ENCODE measurements at regions of chr9 and their contacts with region 1.

Region 1: DNA sequence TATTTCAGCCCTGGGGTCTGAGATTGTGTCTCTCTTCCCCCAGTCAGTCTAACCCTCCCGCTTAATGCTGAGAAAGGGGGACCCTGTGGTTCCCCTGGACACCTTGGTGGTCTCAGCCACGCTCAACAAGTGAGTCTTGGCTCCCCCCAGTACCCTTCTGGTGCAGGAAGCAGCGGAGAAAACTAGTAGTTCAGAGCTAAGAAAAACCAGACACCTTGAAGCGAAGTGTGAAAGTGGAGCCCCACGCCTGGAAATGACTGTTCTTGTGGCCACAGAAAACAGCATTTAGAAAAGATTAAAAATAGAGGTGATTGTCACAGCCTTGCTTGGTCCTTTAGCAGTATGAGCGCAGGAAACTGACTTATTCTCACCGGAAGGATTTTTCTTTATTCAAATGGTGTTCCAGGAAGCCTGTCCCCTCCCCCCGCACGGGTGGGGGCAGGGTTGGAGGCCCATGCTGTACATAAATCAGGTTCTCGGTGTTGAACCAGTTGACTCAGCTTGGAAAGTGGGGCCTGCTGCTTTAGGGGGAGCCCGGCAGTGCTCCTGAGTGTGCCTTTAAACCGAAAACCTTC is 8.1 kb downstream of the ARPC5L start:
- DNase-seq: peak; percentile 98
- H3K4me3 Mint-ChIP-seq: peak overlapping the region; percentile 92
- H3K27ac Mint-ChIP-seq: peak overlapping the region; percentile 99
- H3K4me1 Mint-ChIP-seq: peaks cover 52% of the 10 kb centered on the region
- H3K27me3 Mint-ChIP-seq: no peaks in the 10 kb centered on the region

Region 2: DNA sequence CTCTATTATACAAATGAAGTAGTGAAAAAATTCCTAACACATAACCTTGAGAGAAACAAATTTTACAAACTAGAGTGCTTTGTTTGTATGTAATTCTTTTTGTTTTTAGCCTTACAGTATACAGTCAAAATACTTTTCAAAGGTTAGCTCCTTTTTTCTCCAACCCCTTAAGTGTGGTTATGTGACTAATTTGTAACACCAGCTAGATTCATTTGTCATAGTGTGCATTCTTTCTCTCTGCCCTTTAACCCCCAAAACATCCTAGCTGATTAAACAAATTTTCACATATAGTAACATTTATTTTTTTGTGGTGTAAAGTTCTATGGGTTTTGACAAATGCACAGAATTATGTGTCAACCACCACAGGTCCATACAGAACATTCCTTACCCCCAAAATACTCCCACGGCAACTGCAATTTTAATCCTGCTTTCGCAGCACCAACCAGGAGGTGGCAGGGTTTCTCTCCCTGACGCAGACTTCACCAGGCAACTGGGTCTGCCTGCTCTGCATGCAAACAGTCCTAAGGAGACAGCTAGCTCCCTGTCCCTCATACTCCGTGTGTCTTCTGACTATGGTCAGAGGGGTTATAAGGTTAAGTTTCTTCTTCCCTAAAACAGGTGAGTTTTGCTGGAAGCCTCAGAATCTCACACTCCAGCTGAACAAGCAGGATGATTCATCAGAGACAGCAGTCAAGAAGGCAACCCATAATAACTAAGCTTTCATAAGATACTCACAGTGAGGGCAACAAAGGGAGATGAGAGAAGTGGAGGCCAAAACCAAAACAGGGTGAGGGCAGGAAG is 318.4 kb before region 1 on chr9:
- CTCF ChIA-PET with region 1: no interaction called
- intact Hi-C with region 1: loop called (anchors 1 kb)
- DNase-seq: peak; percentile 62
- H3K4me3 Mint-ChIP-seq: no peak overlapping the region
- H3K27ac Mint-ChIP-seq: no peak overlapping the region
- H3K4me1 Mint-ChIP-seq: peaks cover 18% of the 10 kb centered on the region
- H3K27me3 Mint-ChIP-seq: no peaks in the 10 kb centered on the region

Region 3: DNA sequence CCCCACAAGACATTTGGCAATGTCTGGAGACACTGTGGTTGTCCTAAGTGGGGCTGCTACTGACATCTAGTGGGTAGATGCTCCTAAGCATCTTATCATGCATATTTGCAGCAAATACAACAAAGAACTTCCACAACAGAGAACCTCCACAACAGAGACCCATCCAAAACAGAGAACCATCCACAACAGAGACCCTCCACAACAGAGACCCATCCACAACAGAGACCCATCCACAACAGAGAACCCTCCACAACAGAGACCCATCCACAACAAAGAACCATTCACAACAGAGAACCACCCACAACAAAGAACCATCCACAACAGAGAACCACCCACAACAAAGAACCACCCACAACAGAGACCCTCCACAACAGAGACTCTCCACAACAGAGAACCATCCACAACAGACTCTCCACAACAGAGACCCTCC is 24.7 kb after region 1 on chr9:
- CTCF ChIA-PET with region 1: interaction called, 3 read pairs
- intact Hi-C with region 1: loop called (anchors 1 kb)
- DNase-seq: peak; percentile 65
- H3K4me3 Mint-ChIP-seq: no peak overlapping the region
- H3K27ac Mint-ChIP-seq: no peak overlapping the region
- H3K4me1 Mint-ChIP-seq: peaks cover 11% of the 10 kb centered on the region
- H3K27me3 Mint-ChIP-seq: no peaks in the 10 kb centered on the region

Region 4: GRCh38 chr9:124964604-124965003 is 94.5 kb after region 1 on chr9:
- CTCF ChIA-PET with region 1: no interaction called
- intact Hi-C with region 1: loop called (anchors 5 kb)
- DNase-seq: no peak
- H3K4me3 Mint-ChIP-seq: no peak overlapping the region
- H3K27ac Mint-ChIP-seq: peak overlapping the region; percentile 90
- H3K4me1 Mint-ChIP-seq: peaks cover 34% of the 10 kb centered on the region
- H3K27me3 Mint-ChIP-seq: no peaks in the 10 kb centered on the region

Region 5: GRCh38 chr9:125089331-125089730 is 219.3 kb after region 1 on chr9:
- CTCF ChIA-PET with region 1: no interaction called
- intact Hi-C with region 1: no loop called
- DNase-seq: no peak
- H3K4me3 Mint-ChIP-seq: no peak overlapping the region
- H3K27ac Mint-ChIP-seq: no peak overlapping the region
- H3K4me1 Mint-ChIP-seq: peaks cover 10% of the 10 kb centered on the region
- H3K27me3 Mint-ChIP-seq: no peaks in the 10 kb centered on the region

Region 6: GRCh38 chr9:125241000-125241862 is 371.2 kb after region 1 on chr9 and contains the start of gene HSPA5:
- CTCF ChIA-PET with region 1: no interaction called
- intact Hi-C with region 1: loop called (anchors 1 kb)
- DNase-seq: peak; percentile 100
- H3K4me3 Mint-ChIP-seq: peak within 1 kb of the TSS; percentile 95
- H3K27ac Mint-ChIP-seq: peak within 1 kb of the TSS; percentile 99
- H3K4me1 Mint-ChIP-seq: peaks cover 44% of the 10 kb centered on the region
- H3K27me3 Mint-ChIP-seq: peaks cover 2% of the 10 kb centered on the region
- total RNA-seq, gene HSPA5: 136 to 138 TPM